ENCODE measurements at regions of chr12 and their contacts with region 1.

Region 1: DNA sequence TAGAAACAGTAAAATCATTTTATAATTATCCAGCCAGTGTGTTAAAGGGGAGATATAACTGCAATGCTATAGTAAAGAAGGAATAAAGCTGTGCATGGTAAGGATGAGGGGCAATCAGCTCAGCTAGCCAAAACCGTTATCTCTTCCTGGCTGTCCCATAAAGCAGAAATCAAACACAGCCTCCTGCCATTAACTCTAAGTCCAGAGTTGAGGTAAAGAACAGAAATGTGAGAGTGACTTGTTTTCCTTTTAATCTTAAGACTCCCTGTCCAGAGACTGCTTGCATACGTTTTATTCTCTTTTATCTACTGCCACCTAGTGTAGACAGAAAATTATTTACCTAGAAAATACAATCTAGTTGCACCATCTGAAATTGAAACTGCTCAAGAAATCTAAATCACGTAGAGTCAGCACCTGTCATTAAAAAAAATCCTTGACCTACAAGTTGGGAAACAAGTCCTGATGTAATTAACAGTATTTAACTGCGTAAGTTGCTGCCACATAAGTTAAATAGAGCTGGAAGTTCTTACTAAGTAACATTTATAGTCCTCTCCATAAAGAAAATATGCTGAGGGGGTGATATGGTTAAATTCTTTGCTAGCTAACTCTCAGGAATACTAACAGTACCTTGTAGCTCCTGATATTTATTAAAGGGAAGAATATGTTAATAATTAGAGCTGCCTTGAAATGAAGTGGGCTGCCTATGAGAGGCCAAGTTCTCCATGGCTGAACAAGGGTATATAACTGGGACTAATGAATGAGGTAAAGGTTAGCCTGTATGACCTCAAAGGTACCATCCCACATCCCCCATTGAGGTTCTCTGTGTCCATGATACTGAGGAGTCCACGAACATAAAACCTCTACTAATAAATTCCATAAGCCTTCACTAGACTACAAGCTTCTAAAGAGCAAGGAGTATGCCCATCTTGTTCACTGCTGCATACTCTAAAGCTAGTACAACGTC is 62.7 kb downstream of the GALNT4 start:
- DNase-seq: no peak
- H3K4me3 ChIP-seq: peak overlapping the region; percentile 24 to 36 (median 24)
- H3K27ac ChIP-seq: peak overlapping the region; percentile 20 to 57 (median 52)
- H3K4me1 ChIP-seq: peaks cover 3 to 18% (median 15%) of the 10 kb centered on the region in 4 donors
- H3K27me3 ChIP-seq: no peaks in the 10 kb centered on the region
- CTCF ChIP-seq: peak; percentile 58 to 70 (median 66)
- EP300 ChIP-seq: no peak
- POLR2A ChIP-seq: no peak

Region 2: DNA sequence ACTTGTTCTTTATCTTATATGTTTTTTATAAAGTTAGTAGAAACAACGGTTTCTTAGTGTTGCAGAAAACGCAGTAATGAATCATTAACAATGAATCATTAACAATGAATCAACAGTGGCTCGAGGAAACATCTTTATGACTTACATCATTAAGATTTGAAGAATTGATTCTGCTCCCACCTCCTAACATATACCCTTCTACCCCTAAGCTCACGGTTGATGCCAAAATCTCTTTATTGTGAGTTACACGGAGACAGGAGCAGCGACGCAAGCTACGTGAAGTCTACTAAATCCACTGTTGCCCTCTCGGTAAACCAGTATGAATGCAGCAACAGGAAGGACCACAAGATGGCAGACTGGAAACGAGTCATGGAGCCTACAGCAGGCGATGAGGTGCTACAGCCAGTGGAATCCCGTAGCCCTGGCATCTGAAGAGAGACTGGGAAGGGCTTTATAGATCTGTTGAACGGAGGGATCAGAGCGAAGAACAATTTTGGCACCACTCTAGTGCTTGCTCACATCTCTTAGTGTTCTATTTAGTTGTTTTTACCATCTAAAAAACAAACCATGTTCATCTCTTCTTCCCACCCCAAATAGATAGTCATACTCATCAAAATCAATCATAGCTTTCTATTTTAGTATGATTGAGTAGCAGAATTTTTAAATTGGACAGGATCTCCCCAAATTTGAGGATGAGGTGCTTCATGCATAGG is 442.4 kb before region 1 on chr12:
- intact Hi-C with region 1: loop called (anchors 2 kb)
- DNase-seq: no peak
- H3K4me3 ChIP-seq: peak overlapping the region; percentile 34 to 53 (median 40)
- H3K27ac ChIP-seq: no peak overlapping the region
- H3K4me1 ChIP-seq: peaks cover 3 to 20% (median 17%) of the 10 kb centered on the region in 4 donors
- H3K27me3 ChIP-seq: no peaks in the 10 kb centered on the region
- CTCF ChIP-seq: peak; percentile 76 to 88 (median 88)
- EP300 ChIP-seq: no peak
- POLR2A ChIP-seq: no peak

Region 3: GRCh38 chr12:89051065-89051677 is 410.8 kb before region 1 on chr12:
- intact Hi-C with region 1: loop called (anchors 2 kb)
- DNase-seq: peak; percentile 42
- H3K4me3 ChIP-seq: no peak overlapping the region
- H3K27ac ChIP-seq: no peak overlapping the region
- H3K4me1 ChIP-seq: no peaks in the 10 kb centered on the region
- H3K27me3 ChIP-seq: no peaks in the 10 kb centered on the region
- CTCF ChIP-seq: peak; percentile 92 to 95 (median 95)
- EP300 ChIP-seq: no peak
- POLR2A ChIP-seq: no peak

Region 4: GRCh38 chr12:89244536-89244935 is 217.4 kb before region 1 on chr12:
- intact Hi-C with region 1: loop called (anchors 10 kb)
- DNase-seq: no peak
- H3K4me3 ChIP-seq: no peak overlapping the region
- H3K27ac ChIP-seq: peak overlapping the region in 3 of 4 donors; percentile 6 to 53 (median 38)
- H3K4me1 ChIP-seq: peaks cover 0 to 31% (median 26%) of the 10 kb centered on the region in 4 donors
- H3K27me3 ChIP-seq: no peaks in the 10 kb centered on the region
- CTCF ChIP-seq: no peak
- EP300 ChIP-seq: no peak
- POLR2A ChIP-seq: no peak

Region 5: GRCh38 chr12:89524541-89525285 is 62.8 kb after region 1 on chr12 and contains the start of gene GALNT4:
- intact Hi-C with region 1: loop called (anchors 2 kb)
- DNase-seq: peak; percentile 98
- H3K4me3 ChIP-seq: peak within 1 kb of the TSS; percentile 77 to 92 (median 82)
- H3K27ac ChIP-seq: peak within 1 kb of the TSS; percentile 89 to 94 (median 90)
- H3K4me1 ChIP-seq: peaks cover 38 to 57% (median 49%) of the 10 kb centered on the region in 4 donors
- H3K27me3 ChIP-seq: no peaks in the 10 kb centered on the region
- CTCF ChIP-seq: peak; percentile 57 to 84 (median 60)
- EP300 ChIP-seq: no peak
- POLR2A ChIP-seq: peak; percentile 5
- total RNA-seq, gene GALNT4: 5.0 to 6.2 (median 5.4) TPM